ENCODE measurements at regions of chr4 and their contacts with region 1.

Region 1: DNA sequence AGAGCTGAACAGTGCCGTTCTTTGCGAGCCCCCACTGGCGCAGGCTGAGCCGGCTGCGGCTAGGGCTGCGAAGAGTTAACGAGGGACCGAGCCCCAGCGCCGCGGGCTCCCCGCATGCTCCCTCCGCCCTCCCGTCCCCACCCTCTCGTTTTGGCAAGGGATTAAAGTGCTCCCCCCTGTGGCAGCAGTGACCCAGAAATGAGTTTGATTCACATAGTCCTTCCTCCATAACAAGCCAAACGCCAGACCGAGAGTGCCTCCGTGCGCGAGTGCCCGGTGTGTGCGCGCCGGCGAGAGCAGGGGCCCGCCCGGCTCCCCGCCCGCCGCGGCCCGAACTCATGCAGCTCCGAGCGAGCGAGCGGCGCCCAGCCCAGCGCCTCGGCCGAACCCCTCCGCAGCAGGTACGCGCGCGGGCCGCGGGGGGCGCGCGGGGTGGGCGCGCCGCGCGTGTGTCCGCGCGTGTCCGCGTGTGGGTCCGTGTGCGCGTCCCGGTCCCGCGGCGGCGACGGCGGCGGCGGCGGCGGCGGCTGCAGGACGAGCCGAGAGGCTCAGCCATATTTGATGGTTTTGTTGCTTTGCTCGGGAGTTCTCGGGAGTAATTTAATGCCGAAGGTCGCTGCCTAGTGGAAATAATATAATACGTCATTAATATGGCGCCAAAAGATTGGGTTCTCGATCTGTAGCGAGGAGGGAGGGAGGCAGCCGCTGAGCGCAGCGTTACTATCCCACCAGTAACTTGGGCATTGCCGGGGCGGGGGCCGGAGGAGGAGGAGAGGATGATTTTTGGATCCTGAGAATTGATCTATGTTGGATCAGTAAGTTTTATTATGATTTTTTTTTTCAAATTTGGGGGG is at the start of gene JADE1:
- DNase-seq: peak; percentile 97
- H3K4me3 ChIP-seq: peak within 1 kb of the TSS; percentile 75 to 93 (median 81)
- H3K27ac ChIP-seq: peak within 1 kb of the TSS; percentile 83 to 99 (median 96)
- H3K4me1 ChIP-seq: peaks cover 0 to 33% (median 22%) of the 10 kb centered on the region in 6 donors
- H3K27me3 ChIP-seq: no peaks in the 10 kb centered on the region
- CTCF ChIP-seq: peak; percentile 39 to 79 (median 65)
- POLR2A ChIP-seq: peak in 1 of 3 donors; percentile 81
- total RNA-seq, gene JADE1: 25.1 to 37.0 (median 29.5) TPM

Region 2: GRCh38 chr4:128454281-128455075 is 355.2 kb before region 1 on chr4:
- intact Hi-C with region 1: loop called (anchors 5 kb)
- DNase-seq: peak; percentile 84
- H3K4me3 ChIP-seq: no peak overlapping the region
- H3K27ac ChIP-seq: peak overlapping the region in 2 of 8 donors; percentile 33 to 52
- H3K4me1 ChIP-seq: peaks cover 0 to 17% (median 8%) of the 10 kb centered on the region in 6 donors
- H3K27me3 ChIP-seq: no peaks in the 10 kb centered on the region
- CTCF ChIP-seq: peak; percentile 47 to 80 (median 70)
- POLR2A ChIP-seq: no peak

Measured in spleen (tissue), 13 donors.